Right ventricle myocardium inferior (tissue), 1 donor: ENCODE measurements at regions of chr4 and their contacts with region 1.

Region 1: GRCh38 chr4:153573881-153574802 is 108.0 kb downstream of the TMEM131L start:
- DNase-seq: peak; percentile 77
- ATAC-seq: peak; percentile 83

Region 2: GRCh38 chr4:153142700-153143438 is 431.3 kb before region 1 on chr4:
- intact Hi-C with region 1: loop called (anchors 10 kb)
- DNase-seq: peak; percentile 73
- ATAC-seq: peak; percentile 73

Region 3: DNA sequence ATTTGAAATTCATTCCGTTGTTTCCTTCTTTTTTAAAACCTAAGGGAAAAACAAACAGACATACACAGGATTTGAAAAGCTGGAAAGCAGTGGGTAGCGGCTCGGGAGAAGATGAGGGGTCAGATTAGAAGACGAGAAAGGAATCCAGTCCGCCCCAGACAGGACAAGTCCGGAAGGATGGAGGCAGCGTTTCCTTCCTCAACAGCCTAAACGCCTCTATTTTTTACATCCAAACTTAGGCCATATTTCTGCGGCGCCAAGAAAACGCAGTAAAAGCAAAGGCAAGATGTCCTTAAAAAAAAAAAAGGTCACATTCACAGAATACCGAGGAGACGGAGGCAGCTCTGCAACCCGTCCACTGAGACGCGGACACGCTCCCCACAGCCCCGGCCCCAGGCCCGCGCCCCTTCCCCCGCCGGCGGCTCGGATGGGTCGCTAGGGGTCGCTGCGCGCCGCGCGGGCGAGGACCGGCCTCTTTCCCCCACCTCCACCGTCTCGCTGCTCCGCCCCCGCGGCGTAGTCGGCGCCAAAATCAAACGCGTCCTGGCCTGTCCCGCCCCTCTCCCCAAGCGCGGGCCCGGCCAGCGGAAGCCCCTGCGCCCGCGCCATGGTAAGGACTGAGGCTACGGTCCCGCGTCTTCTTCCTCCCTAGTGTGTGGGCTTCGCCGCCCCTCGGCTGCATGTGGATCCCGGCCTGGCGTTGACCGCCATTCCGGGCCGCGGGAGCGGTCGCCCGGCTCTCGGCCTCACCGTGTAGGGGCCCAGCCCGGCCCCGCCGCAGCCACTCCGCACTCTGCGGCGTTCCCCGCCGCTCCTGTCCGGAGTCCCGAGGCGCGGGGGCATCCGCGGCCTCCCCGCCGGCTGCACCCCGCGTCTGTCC is 229.8 kb before region 1 on chr4 and contains the start of gene MND1:
- intact Hi-C with region 1: loop called (anchors 1 kb)
- DNase-seq: peak; percentile 93
- ATAC-seq: peak; percentile 98
- total RNA-seq, gene MND1: 0.62 TPM

Region 4: DNA sequence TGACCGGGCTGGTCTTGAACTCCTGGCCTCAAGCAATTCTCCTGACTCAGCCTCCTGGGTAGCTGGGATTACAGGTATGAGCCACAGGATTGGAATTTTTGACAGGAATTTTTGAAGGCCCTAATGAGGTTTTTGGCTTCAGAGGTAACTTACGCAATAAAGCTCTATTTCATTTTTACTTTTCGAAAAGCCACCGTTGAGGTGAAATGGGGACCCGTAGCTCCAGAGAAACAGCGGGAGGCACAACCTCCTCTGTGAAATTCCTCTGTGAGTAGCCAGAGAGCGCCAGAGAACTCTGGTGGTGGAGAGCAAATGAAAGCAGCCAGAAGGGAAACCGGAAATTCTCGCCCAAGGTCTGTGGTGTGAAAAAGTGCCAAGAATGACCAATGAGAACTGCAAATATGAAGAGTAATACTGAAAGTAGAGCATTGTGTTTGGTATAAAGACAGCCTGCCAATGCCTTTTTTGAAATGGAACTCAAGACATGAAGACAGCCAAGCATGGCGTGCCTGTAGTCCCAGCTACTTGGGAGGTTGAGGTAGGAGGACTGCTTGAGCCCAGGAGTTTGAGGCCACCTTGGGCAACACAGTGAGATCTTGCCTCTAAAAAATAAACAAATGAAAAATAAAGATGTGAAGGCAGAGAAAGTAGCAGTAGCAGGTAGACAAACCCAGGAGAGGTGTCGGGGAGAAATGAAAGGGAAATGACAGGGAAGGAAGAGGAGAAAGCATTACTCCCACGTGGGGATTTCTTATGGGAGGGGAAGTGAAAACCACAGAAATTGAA is 141.0 kb before region 1 on chr4:
- intact Hi-C with region 1: loop called (anchors 1 kb)
- DNase-seq: peak; percentile 70
- ATAC-seq: peak; percentile 83

Region 5: GRCh38 chr4:153466081-153466948 is 107.8 kb before region 1 on chr4 and contains the start of gene TMEM131L:
- intact Hi-C with region 1: loop called (anchors 1 kb)
- DNase-seq: peak; percentile 90
- ATAC-seq: peak; percentile 93
- total RNA-seq, gene TMEM131L: 14.4 TPM

Region 6: DNA sequence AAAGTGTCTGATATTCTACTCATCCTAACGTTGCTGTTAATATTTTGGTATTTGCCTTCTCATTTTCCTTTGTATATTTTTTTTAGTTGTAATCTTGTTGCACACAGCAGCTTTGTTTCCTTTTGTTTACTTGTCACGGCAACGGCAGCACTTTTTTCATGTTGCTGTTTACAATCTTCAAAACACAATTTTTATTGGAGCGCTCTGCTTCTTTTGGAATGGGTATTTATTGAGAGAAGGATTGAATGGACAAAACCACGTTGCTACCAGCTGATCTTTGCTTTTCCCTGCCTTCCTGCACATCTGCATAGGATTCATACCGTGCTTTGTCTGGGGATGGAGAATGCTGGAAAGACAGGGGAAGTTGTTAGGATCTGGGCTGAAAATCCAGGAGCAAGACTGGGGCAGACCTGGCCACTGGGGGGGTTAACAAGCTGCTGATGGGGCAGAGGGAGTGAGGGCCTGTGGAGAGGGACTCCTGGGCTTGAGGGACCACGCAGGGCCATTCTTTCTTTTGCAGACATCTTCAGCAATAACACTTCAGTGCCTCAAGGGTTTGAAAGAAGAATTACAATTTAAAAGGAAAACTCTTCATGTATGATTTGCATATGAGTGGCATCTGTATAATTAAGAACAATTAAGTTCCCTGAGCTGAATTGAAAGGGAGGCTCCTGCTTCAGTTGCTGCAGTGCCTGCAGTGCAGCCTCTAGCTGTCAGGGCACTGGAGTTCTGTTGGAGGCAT is 38.2 kb before region 1 on chr4:
- intact Hi-C with region 1: no loop called
- DNase-seq: no peak
- ATAC-seq: no peak

Region 7: DNA sequence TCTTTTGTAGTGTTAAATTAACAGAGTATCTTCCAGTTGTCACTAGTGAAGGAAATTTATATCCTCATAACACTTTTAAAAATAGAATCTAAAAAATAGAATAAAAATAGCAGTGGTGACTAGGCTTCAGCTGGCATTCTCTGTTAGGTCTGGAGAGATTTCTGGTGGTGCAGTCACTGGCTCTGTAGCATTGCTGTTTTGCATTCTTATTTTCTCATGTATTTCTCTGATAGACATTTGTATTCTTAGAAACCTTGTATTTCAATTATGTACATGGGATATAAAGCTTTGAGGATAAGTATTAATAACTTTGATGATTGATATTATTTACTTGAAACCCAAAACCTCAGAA is 20.3 kb before region 1 on chr4:
- intact Hi-C with region 1: loop called (anchors 2 kb)
- DNase-seq: no peak
- ATAC-seq: peak; percentile 67

Region 8: DNA sequence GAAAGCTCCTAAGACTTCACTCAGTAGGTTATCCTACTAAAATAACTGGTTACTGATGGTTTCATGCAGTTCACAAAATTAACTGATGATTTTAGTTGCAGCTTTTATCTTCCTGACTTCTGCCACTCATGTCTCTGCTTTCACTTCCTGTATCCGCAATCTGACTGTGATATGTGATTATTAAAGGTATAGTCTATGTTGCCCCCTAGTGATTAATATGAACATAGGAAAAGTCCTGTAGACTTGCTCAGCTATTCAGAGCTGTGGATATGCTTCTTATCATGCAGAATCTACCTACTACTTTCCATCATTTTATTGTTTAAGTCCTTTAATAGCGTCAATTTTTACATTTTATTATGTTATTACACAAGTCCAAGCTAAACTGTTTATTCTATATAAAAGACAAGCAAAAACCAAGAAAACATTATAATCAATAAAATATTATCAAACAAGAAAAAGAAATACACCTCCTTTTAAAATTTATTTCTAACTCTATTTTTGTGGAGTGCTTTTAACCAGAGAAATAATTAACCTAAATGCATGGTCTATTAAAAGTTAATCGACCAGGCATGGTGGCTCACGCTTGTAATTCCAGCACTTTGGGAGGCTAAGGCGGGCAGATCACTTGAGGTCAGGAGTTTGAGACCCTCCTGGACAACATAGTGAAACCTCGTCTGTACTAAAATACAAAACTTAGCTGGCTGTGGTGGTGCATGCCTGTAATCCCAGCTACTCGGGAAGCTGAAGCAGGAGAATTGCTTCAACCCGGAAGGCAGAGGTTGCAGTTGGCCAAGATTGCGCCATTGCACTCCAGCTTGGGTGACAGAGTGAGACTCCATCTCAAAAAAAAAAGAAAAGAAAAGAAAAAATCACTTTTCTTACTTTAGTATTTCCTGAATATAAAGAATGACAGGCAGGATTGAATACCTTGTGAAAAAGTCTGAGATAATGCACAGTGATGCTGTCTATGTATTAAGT is 69.6 kb after region 1 on chr4:
- intact Hi-C with region 1: no loop called
- DNase-seq: no peak
- ATAC-seq: no peak